ENCODE measurements at regions of chr10 and their contacts with region 1.

Region 1: GRCh38 chr10:69644658-69645295 is 14.7 kb downstream of the FAM241B start:
- DNase-seq: peak; percentile 85
- H3K27ac ChIP-seq: no peak overlapping the region
- CTCF ChIP-seq: peak; percentile 74

Region 2: GRCh38 chr10:69612760-69613159 is 32.0 kb before region 1 on chr10:
- CTCF ChIA-PET with region 1: no interaction called
- POLR2A ChIA-PET with region 1: no interaction called
- DNase-seq: no peak
- H3K27ac ChIP-seq: no peak overlapping the region
- CTCF ChIP-seq: no peak

Region 3: GRCh38 chr10:69655124-69655867 is 10.5 kb after region 1 on chr10:
- CTCF ChIA-PET with region 1: interaction called, 12 read pairs
- POLR2A ChIA-PET with region 1: no interaction called
- DNase-seq: no peak
- H3K27ac ChIP-seq: no peak overlapping the region
- CTCF ChIP-seq: no peak

Region 4: GRCh38 chr10:69716711-69717560 is 72.2 kb after region 1 on chr10:
- CTCF ChIA-PET with region 1: interaction called, 33 read pairs
- POLR2A ChIA-PET with region 1: interaction called, 3 read pairs
- DNase-seq: peak; percentile 84
- H3K27ac ChIP-seq: no peak overlapping the region
- CTCF ChIP-seq: peak; percentile 65

Region 5: GRCh38 chr10:69895759-69896158 is 251.0 kb after region 1 on chr10:
- CTCF ChIA-PET with region 1: no interaction called
- POLR2A ChIA-PET with region 1: no interaction called
- DNase-seq: no peak
- H3K27ac ChIP-seq: no peak overlapping the region
- CTCF ChIP-seq: no peak

Measured in RWPE1 (cell line).